Left colon (tissue), 2 donors: ENCODE measurements at regions of chr19 and their contacts with region 1.

Region 1: GRCh38 chr19:9342610-9343304 is 18.8 kb downstream of the ZNF559 start:
- DNase-seq: no peak
- ATAC-seq: no peak

Region 2: DNA sequence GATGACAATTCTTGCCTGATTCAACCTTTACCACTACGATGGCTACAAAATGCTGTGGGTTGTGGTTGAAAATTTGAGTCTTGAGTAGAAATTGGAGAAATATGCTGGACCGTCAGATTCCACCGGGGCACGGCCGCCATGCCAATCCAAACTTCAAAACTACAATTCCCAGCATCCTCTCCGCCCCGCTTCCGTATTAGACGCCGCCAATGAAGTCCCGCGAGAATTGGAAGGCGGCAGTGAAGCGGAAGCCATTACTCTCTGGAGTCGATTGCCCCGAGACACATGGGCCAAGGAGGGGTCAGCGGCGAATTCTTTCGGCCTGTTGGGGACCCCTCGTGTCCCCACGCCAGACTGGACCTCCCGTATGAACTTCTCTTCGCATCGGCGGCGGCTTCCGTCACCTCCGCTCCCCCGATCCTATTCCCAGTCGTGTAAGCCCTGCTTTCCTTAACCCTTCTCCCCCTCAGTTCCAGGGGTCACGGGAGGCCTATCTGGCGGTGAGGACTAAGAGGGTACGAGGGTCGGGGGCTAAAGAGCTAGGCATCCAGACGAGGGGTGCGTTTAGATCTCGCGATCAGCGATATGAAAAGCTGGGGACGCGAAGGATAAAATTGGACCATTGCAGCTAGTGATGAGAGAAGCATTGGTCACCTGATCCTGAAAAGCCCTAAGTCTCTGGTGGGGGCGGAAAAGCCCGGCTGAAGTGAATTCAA is 202.4 kb before region 1 on chr19 and contains the start of gene ZNF317:
- intact Hi-C with region 1: no loop called
- DNase-seq: peak; percentile 94 to 96
- ATAC-seq: peak; percentile 99
- total RNA-seq, gene ZNF317: 24.8 to 32.3 TPM

Region 3: GRCh38 chr19:9757544-9758501 is 415.1 kb after region 1 on chr19:
- intact Hi-C with region 1: loop called in 1 of 2 experiments (anchors 5 kb)
- DNase-seq: no peak
- ATAC-seq: no peak